ENCODE measurements at regions of chr1 and their contacts with region 1.

Region 1: GRCh38 chr1:212035123-212035834 is at the starts of genes DTL and INTS7:
- DNase-seq: peak; percentile 99
- H3K4me3 ChIP-seq: peak within 1 kb of the TSS; percentile 70 to 94 (median 78)
- H3K27ac ChIP-seq: peak within 1 kb of the TSS; percentile 71
- H3K4me1 ChIP-seq: peaks cover 36% of the 10 kb centered on the region
- H3K27me3 ChIP-seq: no peaks in the 10 kb centered on the region
- CTCF ChIP-seq: peak; percentile 90 to 95
- POLR2A ChIP-seq: peak; percentile 76
- total RNA-seq, gene DTL: 26.5 and 27.2 TPM in 2 replicates
- total RNA-seq, gene INTS7: 16.1 and 18.1 TPM in 2 replicates

Region 2: DNA sequence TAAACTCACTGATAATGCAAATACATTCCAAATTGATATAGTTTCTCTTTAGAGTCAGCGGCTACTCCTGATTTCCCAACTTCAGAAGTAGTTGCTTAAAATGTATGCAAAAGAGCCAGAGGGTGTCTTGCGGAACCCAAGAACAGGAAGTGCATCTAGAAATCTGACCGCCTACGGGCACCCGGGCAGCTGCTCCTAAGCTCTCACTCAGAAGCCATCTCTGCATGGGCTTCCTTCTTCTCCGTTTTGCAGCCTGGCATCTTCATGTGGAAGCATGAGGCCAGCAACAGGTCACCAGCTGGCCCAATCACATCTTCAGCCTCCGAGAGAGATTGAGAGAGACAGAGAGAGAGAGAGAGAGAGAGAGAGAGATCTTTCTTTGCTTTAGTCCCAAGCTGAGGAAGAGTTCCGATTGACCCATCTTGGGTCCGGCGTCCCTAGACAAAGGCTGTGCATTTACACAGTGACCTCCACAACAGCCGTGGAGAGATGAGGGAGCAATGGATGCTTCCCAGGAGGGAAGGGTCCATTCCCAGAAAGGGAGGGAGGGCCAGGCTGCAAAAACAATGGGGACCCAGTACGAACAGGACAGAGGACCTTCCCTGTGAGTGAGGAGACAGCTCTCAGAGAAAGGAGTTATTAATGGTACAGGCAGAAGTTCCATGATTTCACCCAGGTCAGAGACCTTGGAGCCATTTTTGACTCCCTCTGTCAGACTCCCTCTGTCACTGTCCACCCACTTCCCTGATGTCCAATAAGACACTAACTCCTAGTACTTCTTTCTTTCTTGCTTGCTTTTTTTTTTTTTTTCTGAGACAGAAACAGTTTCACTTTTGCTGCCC is 428.1 kb before region 1 on chr1:
- CTCF ChIA-PET with region 1: no interaction called
- POLR2A ChIA-PET with region 1: no interaction called
- dilution Hi-C with region 1: no loop called
- intact Hi-C with region 1: no loop called
- DNase-seq: no peak
- H3K4me3 ChIP-seq: no peak overlapping the region
- H3K27ac ChIP-seq: no peak overlapping the region
- H3K4me1 ChIP-seq: peaks cover 5% of the 10 kb centered on the region
- H3K27me3 ChIP-seq: no peaks in the 10 kb centered on the region
- CTCF ChIP-seq: no peak
- POLR2A ChIP-seq: no peak

Region 3: GRCh38 chr1:211675230-211676105 is 359.8 kb before region 1 on chr1 and contains the start of gene NEK2:
- CTCF ChIA-PET with region 1: interaction called, 148 read pairs
- POLR2A ChIA-PET with region 1: interaction called, 3 read pairs
- dilution Hi-C with region 1: no loop called
- intact Hi-C with region 1: loop called (anchors 1 kb)
- DNase-seq: peak; percentile 91
- H3K4me3 ChIP-seq: peak within 1 kb of the TSS; percentile 64 to 85 (median 78)
- H3K27ac ChIP-seq: peak within 1 kb of the TSS; percentile 3
- H3K4me1 ChIP-seq: peaks cover 12% of the 10 kb centered on the region
- H3K27me3 ChIP-seq: no peaks in the 10 kb centered on the region
- CTCF ChIP-seq: no peak
- POLR2A ChIP-seq: no peak
- total RNA-seq, gene NEK2: 19.0 and 20.3 TPM in 2 replicates

Region 4: DNA sequence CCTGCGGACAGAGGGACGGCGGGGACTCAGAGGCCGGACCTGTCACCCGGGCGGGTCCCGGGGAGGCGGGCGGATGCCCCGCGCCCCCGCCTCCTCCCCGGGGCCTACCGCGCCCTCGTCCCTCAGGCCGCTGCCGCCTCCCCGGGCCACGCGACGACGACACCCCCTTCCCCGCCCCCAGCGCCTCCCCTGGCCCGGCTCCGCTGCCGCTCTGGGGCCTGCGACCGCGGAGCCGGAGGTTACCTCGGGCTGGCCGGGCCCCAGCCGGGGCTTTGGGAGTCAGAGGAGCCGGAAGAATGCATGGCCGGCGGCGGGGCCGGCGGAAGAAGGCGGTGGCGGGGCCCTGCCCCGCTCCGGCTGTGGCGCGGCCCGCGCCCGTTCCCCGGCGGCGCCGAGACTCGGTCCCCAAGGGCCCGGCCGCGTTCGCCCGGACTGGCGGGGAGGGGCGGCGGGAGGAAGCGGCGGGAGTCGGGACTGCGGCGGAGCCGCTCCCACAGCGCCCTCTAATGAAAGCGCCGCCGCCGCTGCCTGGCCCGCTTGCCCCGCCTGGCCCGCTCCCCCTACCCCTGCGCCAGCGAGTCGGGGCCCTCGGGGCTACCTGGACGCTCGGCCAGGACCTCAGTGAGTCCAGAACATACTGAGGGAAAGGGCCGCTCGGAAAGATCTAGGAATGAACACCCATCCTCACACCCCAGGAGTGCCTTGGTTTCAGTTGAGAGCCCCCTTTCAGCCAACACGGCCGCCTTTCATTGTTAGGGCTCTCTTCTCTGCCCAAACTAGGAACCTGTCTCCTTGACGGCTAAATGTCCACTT is 204.7 kb before region 1 on chr1 and contains the start of gene LPGAT1:
- CTCF ChIA-PET with region 1: interaction called, 3 read pairs
- POLR2A ChIA-PET with region 1: no interaction called
- dilution Hi-C with region 1: no loop called
- intact Hi-C with region 1: loop called (anchors 1 kb)
- DNase-seq: peak; percentile 58
- H3K4me3 ChIP-seq: peak within 1 kb of the TSS; percentile 74 to 92 (median 82)
- H3K27ac ChIP-seq: peak within 1 kb of the TSS; percentile 55
- H3K4me1 ChIP-seq: peaks cover 7% of the 10 kb centered on the region
- H3K27me3 ChIP-seq: no peaks in the 10 kb centered on the region
- CTCF ChIP-seq: peak; percentile 53 to 63
- POLR2A ChIP-seq: peak; percentile 36
- total RNA-seq, gene LPGAT1: 46.0 and 49.5 TPM in 2 replicates

Region 5: GRCh38 chr1:212062832-212063438 is 27.7 kb after region 1 on chr1:
- CTCF ChIA-PET with region 1: interaction called, 16 read pairs
- POLR2A ChIA-PET with region 1: no interaction called
- dilution Hi-C with region 1: no loop called
- intact Hi-C with region 1: no loop called
- DNase-seq: peak; percentile 57
- H3K4me3 ChIP-seq: no peak overlapping the region
- H3K27ac ChIP-seq: no peak overlapping the region
- H3K4me1 ChIP-seq: peaks cover 13% of the 10 kb centered on the region
- H3K27me3 ChIP-seq: no peaks in the 10 kb centered on the region
- CTCF ChIP-seq: peak; percentile 42 to 45
- POLR2A ChIP-seq: no peak

Region 6: DNA sequence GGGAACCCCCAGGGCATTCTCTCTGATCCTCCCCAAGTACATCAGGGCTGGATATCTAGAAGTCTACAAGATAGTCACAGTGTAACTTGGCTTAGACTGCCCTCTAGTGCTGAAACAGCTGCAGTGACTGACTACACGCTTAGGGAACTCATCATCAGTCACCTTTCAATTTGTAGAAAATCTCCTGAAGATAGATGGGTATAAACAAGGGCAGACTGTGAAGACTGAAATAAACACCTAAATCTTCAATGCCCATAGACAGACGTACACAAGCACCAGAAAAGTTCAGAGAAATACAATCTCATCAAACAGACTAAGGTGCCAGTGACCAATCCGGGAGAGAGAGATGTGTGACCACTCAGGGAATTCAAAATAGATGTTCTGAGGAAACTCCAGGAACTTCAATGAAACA is 332.8 kb after region 1 on chr1:
- CTCF ChIA-PET with region 1: interaction called, 53 read pairs
- POLR2A ChIA-PET with region 1: no interaction called
- dilution Hi-C with region 1: no loop called
- intact Hi-C with region 1: loop called (anchors 1 kb)
- DNase-seq: peak; percentile 68
- H3K4me3 ChIP-seq: no peak overlapping the region
- H3K27ac ChIP-seq: no peak overlapping the region
- H3K4me1 ChIP-seq: no peaks in the 10 kb centered on the region
- H3K27me3 ChIP-seq: no peaks in the 10 kb centered on the region
- CTCF ChIP-seq: peak; percentile 77 to 78
- POLR2A ChIP-seq: no peak

Region 7: GRCh38 chr1:212608209-212608955 is 573.1 kb after region 1 on chr1 and contains the start of gene ATF3:
- CTCF ChIA-PET with region 1: interaction called, 4 read pairs
- POLR2A ChIA-PET with region 1: interaction called, 3 read pairs
- dilution Hi-C with region 1: no loop called
- intact Hi-C with region 1: loop called (anchors 1 kb)
- DNase-seq: peak; percentile 98
- H3K4me3 ChIP-seq: peak within 1 kb of the TSS; percentile 51 to 77 (median 52)
- H3K27ac ChIP-seq: peak within 1 kb of the TSS; percentile 76
- H3K4me1 ChIP-seq: peaks cover 27% of the 10 kb centered on the region
- H3K27me3 ChIP-seq: peaks cover 38 to 44% of the 10 kb centered on the region in 2 experiments
- CTCF ChIP-seq: no peak
- POLR2A ChIP-seq: peak; percentile 98
- total RNA-seq, gene ATF3: 6.1 and 10.7 TPM in 2 replicates